Dorsolateral prefrontal cortex (tissue), 120 donors: ENCODE measurements at regions of chr7 and their contacts with region 1.

Region 1: GRCh38 chr7:152675759-152676636 is at the start of gene XRCC2:
- DNase-seq: peak; percentile 80 to 95 (median 84)
- H3K4me3 ChIP-seq: peak within 1 kb of the TSS; percentile 58 to 100 (median 81)
- H3K27ac ChIP-seq: peak within 1 kb of the TSS; percentile 44 to 95 (median 87)
- H3K27me3 ChIP-seq: no peaks in the 10 kb centered on the region
- CTCF ChIP-seq: peak in 30 of 56 donors; percentile 5 to 56 (median 27)
- total RNA-seq, gene XRCC2: 0.59 to 3.6 (median 1.8) TPM

Region 2: DNA sequence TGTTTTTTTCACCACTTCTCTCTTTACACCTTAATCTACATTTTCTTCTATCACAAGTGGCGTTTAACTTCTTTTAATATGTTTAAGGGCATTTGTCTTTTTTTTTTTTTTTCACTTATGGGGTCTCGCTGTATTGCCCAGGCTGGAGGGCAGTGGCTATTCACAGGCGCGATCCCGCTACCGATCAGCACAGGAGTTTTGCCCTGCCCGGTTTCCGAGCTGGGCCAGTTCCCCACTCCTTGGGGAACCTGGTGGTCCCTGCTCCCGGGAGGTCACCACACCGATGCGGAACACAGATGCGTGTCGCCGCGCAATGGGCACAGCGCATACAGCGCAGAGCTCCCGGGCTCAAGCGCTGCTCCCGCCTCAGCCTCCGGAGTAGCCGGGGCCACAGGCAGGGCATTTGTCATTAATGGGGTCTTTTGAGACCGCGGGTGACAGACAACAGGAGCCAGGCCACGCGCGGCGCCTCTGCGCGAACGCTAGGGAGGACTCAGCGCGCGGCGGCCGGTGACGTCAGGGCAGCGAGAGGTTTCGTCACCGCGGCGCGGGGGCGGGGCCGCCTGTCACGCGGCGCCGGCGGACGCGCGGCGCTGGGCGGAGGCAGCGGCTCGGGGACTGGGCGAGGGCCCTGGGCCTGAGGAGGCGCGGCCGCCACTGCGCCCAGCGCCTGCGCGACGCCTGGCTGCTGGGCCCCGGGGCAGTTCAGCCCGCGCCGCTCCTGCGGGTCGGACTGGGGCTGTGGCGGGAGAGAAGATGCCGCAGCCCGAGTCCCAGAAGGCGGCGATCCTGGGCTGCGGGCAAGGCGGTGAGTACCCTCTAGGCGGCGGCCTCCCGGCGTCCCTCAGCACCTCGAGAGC is 650.7 kb before region 1 on chr7 and contains the start of gene GALNT11:
- intact Hi-C with region 1: loop called in 1 of 2 experiments (anchors 10 kb)
- DNase-seq: peak; percentile 55 to 91 (median 80)
- H3K4me3 ChIP-seq: peak within 1 kb of the TSS; percentile 47 to 99 (median 86)
- H3K27ac ChIP-seq: peak within 1 kb of the TSS in 57 of 59 donors; percentile 33 to 96 (median 86)
- H3K27me3 ChIP-seq: no peaks in the 10 kb centered on the region
- CTCF ChIP-seq: peak in 33 of 56 donors; percentile 14 to 60 (median 35)
- total RNA-seq, gene GALNT11: 30.5 to 104 (median 66.4) TPM

Region 3: DNA sequence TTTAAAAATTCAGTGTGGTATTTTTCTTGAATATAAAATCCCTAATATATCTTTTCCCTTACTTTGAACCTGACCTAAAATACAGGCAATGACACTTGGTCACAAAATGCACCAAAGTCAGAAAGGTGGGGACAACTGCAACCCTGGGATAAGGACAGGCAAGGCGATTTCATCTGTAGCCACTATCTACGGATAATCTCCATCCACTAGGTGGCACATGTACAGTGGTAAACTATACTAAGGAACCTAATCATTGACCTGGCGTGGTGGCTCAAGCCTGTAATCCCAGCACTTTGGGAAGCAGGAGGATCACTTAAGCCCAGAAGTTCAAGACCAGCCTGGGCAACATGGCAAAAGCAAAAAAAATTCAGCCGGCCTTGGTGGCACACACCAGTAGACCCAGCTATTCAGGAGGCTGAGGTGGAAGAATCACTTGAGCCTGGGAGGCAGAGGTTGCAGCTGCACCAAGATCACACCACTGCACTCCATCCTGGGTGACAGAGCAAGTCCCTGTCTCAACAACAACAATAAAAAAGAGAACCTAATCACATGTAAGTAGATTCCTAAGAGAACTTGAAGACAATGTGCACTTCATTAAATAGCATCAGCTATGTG is 339.1 kb before region 1 on chr7:
- intact Hi-C with region 1: loop called in 1 of 2 experiments (anchors 5 kb)
- DNase-seq: peak in 1 of 10 donors; percentile 10
- H3K4me3 ChIP-seq: peak overlapping the region in 10 of 59 donors; percentile 9 to 51 (median 38)
- H3K27ac ChIP-seq: peak overlapping the region in 36 of 59 donors; percentile 4 to 77 (median 58)
- H3K27me3 ChIP-seq: no peaks in the 10 kb centered on the region
- CTCF ChIP-seq: peak in 55 of 56 donors; percentile 9 to 71 (median 52)

Region 4: DNA sequence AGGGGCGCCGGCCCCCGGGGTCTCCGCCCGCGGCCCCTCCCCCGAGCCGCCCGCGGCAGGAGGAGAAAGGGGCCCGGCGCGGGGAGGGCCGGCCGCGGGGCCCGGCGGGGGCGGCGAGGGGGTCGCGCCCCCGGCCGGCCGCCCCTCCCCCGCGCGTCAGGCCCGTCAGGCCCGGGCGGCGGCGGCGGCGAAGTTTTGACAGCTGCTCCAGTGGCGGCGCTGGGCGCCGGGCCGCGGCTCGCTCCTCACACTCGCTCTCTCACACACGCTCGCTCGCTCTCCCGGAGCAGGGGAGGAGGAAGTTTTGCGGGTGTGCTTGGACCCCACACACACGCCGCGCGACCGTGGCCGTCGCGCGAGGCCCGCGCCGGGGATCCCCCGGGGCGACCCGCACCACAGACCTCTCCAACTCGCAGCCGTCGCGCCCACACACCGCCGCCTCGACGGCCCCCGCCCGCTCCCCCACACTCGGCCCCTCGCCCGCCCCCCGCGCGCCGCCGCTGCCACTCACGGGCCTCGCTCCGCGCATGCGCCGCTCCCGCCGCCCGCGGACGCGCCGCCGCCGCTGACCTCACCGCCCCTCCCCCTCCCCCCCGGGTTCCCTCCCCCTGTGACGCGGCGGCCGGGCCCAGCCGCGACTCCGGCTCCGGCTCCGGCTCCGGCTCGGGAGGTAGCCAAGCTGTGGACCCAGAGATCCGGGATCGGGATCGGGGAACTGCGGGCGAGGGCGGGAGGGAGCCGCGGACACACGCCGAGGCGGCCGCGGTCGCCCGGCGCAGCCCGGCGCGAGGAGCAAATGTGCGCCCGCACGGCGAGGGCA is 239.7 kb before region 1 on chr7:
- intact Hi-C with region 1: loop called (anchors 5 to 10 kb)
- DNase-seq: peak; percentile 81 to 95 (median 92)
- H3K4me3 ChIP-seq: peak overlapping the region; percentile 50 to 87 (median 67)
- H3K27ac ChIP-seq: peak overlapping the region; percentile 49 to 99 (median 95)
- H3K27me3 ChIP-seq: no peaks in the 10 kb centered on the region
- CTCF ChIP-seq: peak in 4 of 56 donors; percentile 10 to 23 (median 20)

Region 5: GRCh38 chr7:152463709-152464311 is 212.2 kb before region 1 on chr7:
- intact Hi-C with region 1: loop called (anchors 1 kb)
- DNase-seq: peak; percentile 100
- H3K4me3 ChIP-seq: peak overlapping the region; percentile 70 to 98 (median 89)
- H3K27ac ChIP-seq: peak overlapping the region; percentile 90 to 100 (median 99)
- H3K27me3 ChIP-seq: no peaks in the 10 kb centered on the region
- CTCF ChIP-seq: peak in 10 of 56 donors; percentile 3 to 27 (median 11)

Region 6: DNA sequence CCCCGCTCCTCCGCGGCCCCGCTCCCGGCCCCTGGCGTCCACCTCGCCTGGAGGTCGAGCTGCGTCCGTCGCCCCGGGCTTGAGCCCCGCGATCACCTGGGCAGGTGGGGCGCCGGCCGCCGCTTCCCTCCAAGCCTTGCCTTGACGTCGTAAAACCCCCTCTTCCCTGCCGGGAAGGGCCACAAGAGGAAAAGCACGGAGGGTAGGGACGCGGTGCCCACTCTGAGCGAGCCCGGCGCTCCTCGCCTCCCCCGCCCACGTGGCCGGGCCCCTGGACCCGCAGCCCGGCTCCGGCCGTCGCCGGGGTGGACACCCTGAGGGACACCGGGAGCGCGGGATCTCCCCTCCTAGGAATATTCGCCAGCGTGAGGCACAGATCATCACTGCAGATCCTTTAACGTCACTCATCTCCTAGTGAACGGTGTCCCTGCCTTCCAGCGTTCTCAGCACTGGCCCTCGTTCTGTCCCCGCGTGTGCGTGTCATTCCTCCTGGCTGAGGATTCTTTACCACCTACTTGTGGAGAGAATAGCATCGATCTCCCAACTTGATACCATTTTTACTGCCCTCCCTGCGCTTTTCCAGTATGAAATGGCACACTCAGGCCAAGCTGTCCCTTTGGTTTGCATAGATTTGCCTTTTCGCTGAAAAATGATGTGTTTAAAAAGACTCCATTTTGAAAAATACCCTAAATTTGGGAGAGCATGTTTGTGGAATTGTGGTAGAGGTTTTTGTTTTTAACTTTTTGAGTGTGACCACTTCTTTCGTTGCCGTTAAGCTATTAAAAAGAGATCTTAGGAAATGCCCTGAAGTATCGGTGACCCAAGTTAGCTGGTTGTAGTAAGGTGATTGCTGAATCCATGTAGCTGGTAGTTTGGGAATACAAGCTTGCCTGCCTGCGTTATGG is 84.2 kb after region 1 on chr7:
- intact Hi-C with region 1: loop called (anchors 2 to 5 kb)
- DNase-seq: peak; percentile 23 to 70 (median 50)
- H3K4me3 ChIP-seq: peak overlapping the region; percentile 68 to 100 (median 95)
- H3K27ac ChIP-seq: peak overlapping the region; percentile 43 to 96 (median 88)
- H3K27me3 ChIP-seq: no peaks in the 10 kb centered on the region
- CTCF ChIP-seq: peak in 3 of 56 donors; percentile 6 to 15 (median 10)